ENCODE measurements at regions of chr5 and their contacts with region 1.

Region 1: DNA sequence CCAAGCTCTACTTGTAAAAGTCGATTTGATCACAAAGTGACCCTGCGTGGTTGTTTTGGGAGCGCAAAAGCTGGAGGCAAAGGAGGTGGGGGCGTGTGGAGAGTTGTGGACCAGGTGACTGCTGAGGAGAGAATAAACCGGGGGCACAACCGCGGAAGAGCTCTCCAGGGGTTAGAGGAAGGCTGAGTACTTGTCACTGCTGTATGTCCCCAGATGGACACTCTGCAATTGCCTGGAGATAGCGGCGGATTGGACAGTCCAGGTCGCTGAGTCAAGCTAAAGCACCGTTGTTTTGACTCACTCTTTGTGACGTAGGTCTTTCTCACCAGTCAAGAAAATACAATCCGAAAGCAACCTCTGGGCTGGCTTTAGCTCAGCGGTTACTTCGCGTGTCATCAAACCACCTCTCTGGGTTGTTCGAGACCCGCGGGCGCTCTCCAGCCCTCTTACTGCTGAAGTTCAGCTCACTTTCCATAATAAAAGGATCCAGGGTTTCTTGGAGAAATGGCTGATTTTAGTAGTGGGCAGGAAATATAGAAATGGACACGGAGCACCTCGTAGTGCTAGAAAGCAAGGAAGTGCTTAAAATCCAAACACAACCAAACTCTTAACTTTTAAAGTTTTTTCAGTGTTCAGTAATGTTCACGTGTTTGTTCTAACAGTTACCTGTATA is 25.7 kb downstream of the ZMAT2 start:
- DNase-seq: peak; percentile 96
- ATAC-seq: peak; percentile 92
- H3K4me3 ChIP-seq: peak overlapping the region; percentile 22 to 45
- H3K27ac ChIP-seq: no peak overlapping the region
- H3K4me1 ChIP-seq: peaks cover 4 to 18% of the 10 kb centered on the region in 2 experiments; a peak in 3 of 4 replicates
- H3K27me3 ChIP-seq: no peaks in the 10 kb centered on the region
- CTCF ChIP-seq: no peak
- POLR2A ChIP-seq: no peak
- RAD21 ChIP-seq: no peak

Region 2: GRCh38 chr5:140609126-140609525 is 116.8 kb before region 1 on chr5:
- CTCF ChIA-PET with region 1: no interaction called
- POLR2A ChIA-PET with region 1: no interaction called
- RAD21 ChIA-PET with region 1: no interaction called
- intact Hi-C with region 1: no loop called
- DNase-seq: no peak
- ATAC-seq: no peak
- H3K4me3 ChIP-seq: no peak overlapping the region
- H3K27ac ChIP-seq: no peak overlapping the region
- H3K4me1 ChIP-seq: no peaks in the 10 kb centered on the region
- H3K27me3 ChIP-seq: no peaks in the 10 kb centered on the region
- CTCF ChIP-seq: no peak
- POLR2A ChIP-seq: no peak
- RAD21 ChIP-seq: no peak

Region 3: DNA sequence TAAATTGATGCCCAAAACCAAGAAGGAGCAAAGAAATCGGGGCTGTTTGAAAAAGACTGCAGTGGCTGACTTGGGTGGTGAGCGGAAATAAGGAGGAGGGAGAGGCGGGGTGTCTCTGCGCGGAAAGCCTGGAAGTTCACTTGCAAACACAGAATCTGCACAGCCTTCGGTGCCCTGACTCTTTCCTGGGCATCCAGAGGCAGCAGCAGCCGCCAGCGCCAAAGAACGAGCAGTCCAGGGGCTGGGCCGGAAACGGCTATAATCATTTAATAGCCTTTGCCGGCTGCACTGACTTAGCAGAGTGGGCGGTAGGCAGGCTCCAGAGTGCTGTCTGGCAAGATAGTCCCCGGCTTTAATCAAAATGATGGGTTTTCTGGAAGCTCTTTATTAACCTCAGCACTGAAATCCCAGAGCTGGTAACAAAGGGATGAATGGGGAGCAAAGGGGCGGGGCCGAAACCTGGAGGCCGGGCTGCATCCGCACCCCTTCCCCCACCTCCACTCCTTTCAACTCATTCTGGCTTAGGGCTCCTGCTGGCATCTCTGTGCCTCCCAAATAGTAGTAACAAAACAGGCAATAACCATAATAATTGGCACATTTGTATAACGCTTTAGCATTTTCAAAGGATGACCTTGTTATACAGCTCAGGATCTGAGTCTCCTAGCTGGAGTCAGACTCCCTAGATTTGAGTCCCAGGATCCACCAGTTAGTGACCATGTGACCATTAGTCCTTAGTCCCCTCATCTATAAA is 276.1 kb after region 1 on chr5:
- CTCF ChIA-PET with region 1: no interaction called
- POLR2A ChIA-PET with region 1: no interaction called
- RAD21 ChIA-PET with region 1: no interaction called
- intact Hi-C with region 1: loop called (anchors 10 kb)
- DNase-seq: peak; percentile 31
- ATAC-seq: peak; percentile 57
- H3K4me3 ChIP-seq: peak overlapping the region; percentile 43 to 59
- H3K27ac ChIP-seq: peak overlapping the region; percentile 74
- H3K4me1 ChIP-seq: peaks cover 38 to 44% of the 10 kb centered on the region in 2 experiments
- H3K27me3 ChIP-seq: no peaks in the 10 kb centered on the region
- CTCF ChIP-seq: no peak
- POLR2A ChIP-seq: peak; percentile 19
- RAD21 ChIP-seq: no peak

Region 4: GRCh38 chr5:141017943-141018342 is 292.0 kb after region 1 on chr5:
- CTCF ChIA-PET with region 1: no interaction called
- POLR2A ChIA-PET with region 1: no interaction called
- RAD21 ChIA-PET with region 1: no interaction called
- intact Hi-C with region 1: loop called (anchors 5 kb)
- DNase-seq: no peak
- ATAC-seq: no peak; the same call in 1 of the 2 replicates
- H3K4me3 ChIP-seq: no peak overlapping the region
- H3K27ac ChIP-seq: no peak overlapping the region
- H3K4me1 ChIP-seq: no peaks in the 10 kb centered on the region
- H3K27me3 ChIP-seq: no peaks in the 10 kb centered on the region
- CTCF ChIP-seq: no peak
- POLR2A ChIP-seq: no peak
- RAD21 ChIP-seq: no peak

Region 5: GRCh38 chr5:141155540-141156374 is 429.8 kb after region 1 on chr5:
- CTCF ChIA-PET with region 1: no interaction called
- POLR2A ChIA-PET with region 1: no interaction called
- RAD21 ChIA-PET with region 1: no interaction called
- intact Hi-C with region 1: no loop called
- DNase-seq: no peak
- ATAC-seq: peak; percentile 40; the same call in 1 of the 2 replicates
- H3K4me3 ChIP-seq: no peak overlapping the region
- H3K27ac ChIP-seq: no peak overlapping the region
- H3K4me1 ChIP-seq: no peaks in the 10 kb centered on the region
- H3K27me3 ChIP-seq: no peaks in the 10 kb centered on the region
- CTCF ChIP-seq: peak in 2 of 3 experiments; percentile 28 to 40; a peak in 3 of 6 replicates
- POLR2A ChIP-seq: no peak
- RAD21 ChIP-seq: peak; percentile 23; the same call in 1 of the 2 replicates

Region 6: GRCh38 chr5:141512390-141512910 is 786.5 kb after region 1 on chr5:
- CTCF ChIA-PET with region 1: no interaction called
- POLR2A ChIA-PET with region 1: no interaction called
- RAD21 ChIA-PET with region 1: no interaction called
- intact Hi-C with region 1: loop called (anchors 5 kb)
- DNase-seq: peak; percentile 32
- ATAC-seq: peak; percentile 80
- H3K4me3 ChIP-seq: no peak overlapping the region
- H3K27ac ChIP-seq: no peak overlapping the region
- H3K4me1 ChIP-seq: peaks cover 0 to 9% of the 10 kb centered on the region in 2 experiments; a peak in 2 of 4 replicates
- H3K27me3 ChIP-seq: no peaks in the 10 kb centered on the region
- CTCF ChIP-seq: peak; percentile 56 to 90 (median 80); a peak in 5 of 6 replicates
- POLR2A ChIP-seq: no peak
- RAD21 ChIP-seq: peak; percentile 49

Measured in HCT116 (cell line).